SK-N-SH (cell line): ENCODE measurements at regions of chr7 and their contacts with region 1.

Region 1: GRCh38 chr7:113710310-113711106 is 208.3 kb downstream of the PPP1R3A start:
- DNase-seq: peak; percentile 46
- H3K4me3 ChIP-seq: no peak overlapping the region; a peak in 1 of 4 replicates
- H3K27ac ChIP-seq: no peak overlapping the region
- H3K4me1 ChIP-seq: no peaks in the 10 kb centered on the region
- H3K27me3 ChIP-seq: no peaks in the 10 kb centered on the region
- CTCF ChIP-seq: peak; percentile 100
- EP300 ChIP-seq: no peak
- RAD21 ChIP-seq: peak; percentile 68

Region 2: DNA sequence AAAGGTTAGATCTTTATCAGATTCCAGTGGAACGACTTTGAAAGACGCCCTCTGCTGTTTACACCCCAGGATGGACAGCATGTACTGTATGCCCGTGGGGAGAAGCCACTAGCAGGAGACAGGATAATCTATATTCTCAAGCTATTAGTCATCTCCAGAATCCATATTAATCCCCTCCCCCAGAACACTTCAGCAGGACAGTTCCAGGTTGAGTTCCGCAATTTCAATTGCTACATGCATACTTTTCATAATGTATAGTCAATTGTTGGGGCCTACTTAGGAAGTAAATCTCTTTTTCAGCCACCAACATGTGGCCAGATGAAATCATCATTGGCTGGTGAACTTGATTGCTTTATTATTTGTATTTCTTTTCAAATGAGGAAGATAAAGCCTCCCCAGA is 279.1 kb before region 1 on chr7:
- CTCF ChIA-PET with region 1: no interaction called
- POLR2A ChIA-PET with region 1: no interaction called
- DNase-seq: no peak
- H3K4me3 ChIP-seq: no peak overlapping the region
- H3K27ac ChIP-seq: no peak overlapping the region
- H3K4me1 ChIP-seq: no peaks in the 10 kb centered on the region
- H3K27me3 ChIP-seq: no peaks in the 10 kb centered on the region
- CTCF ChIP-seq: peak; percentile 20; the same call in 1 of the 2 replicates
- EP300 ChIP-seq: no peak
- RAD21 ChIP-seq: no peak

Region 3: GRCh38 chr7:113561446-113561845 is 149.1 kb before region 1 on chr7:
- CTCF ChIA-PET with region 1: no interaction called
- POLR2A ChIA-PET with region 1: no interaction called
- DNase-seq: no peak
- H3K4me3 ChIP-seq: no peak overlapping the region
- H3K27ac ChIP-seq: no peak overlapping the region
- H3K4me1 ChIP-seq: no peaks in the 10 kb centered on the region
- H3K27me3 ChIP-seq: no peaks in the 10 kb centered on the region
- CTCF ChIP-seq: no peak
- EP300 ChIP-seq: no peak
- RAD21 ChIP-seq: no peak

Region 4: GRCh38 chr7:113684165-113684564 is 26.3 kb before region 1 on chr7:
- CTCF ChIA-PET with region 1: interaction called, 13 read pairs
- POLR2A ChIA-PET with region 1: no interaction called
- DNase-seq: no peak
- H3K4me3 ChIP-seq: no peak overlapping the region
- H3K27ac ChIP-seq: no peak overlapping the region
- H3K4me1 ChIP-seq: no peaks in the 10 kb centered on the region
- H3K27me3 ChIP-seq: peaks cover 3% of the 10 kb centered on the region; the same call in 1 of the 2 replicates
- CTCF ChIP-seq: no peak
- EP300 ChIP-seq: no peak
- RAD21 ChIP-seq: no peak

Region 5: GRCh38 chr7:113698556-113699220 is 11.8 kb before region 1 on chr7:
- CTCF ChIA-PET with region 1: interaction called, 16 read pairs
- POLR2A ChIA-PET with region 1: no interaction called
- DNase-seq: peak; percentile 17
- H3K4me3 ChIP-seq: no peak overlapping the region
- H3K27ac ChIP-seq: no peak overlapping the region
- H3K4me1 ChIP-seq: no peaks in the 10 kb centered on the region
- H3K27me3 ChIP-seq: no peaks in the 10 kb centered on the region
- CTCF ChIP-seq: peak; percentile 98
- EP300 ChIP-seq: no peak
- RAD21 ChIP-seq: peak; percentile 76

Region 6: DNA sequence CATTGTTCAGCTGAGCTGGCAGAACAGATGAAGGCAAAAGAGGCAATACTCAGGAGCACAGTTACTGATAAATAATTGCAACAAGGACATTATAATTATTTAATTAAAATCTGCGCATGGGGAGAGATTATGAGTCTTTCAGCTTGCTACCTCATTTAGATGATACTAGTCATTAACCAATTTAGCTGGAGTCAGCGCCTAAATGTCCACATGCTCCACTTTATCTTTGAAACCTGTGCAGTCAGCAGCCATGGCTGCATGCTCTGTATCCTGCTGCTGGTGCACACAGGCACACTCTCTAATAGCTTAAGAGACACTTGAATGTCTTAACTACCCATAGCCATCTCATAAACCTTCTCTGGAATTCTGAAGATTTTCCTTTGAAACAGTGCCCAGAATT is 11.5 kb after region 1 on chr7:
- CTCF ChIA-PET with region 1: interaction called, 18 read pairs
- POLR2A ChIA-PET with region 1: no interaction called
- DNase-seq: no peak
- H3K4me3 ChIP-seq: no peak overlapping the region
- H3K27ac ChIP-seq: no peak overlapping the region
- H3K4me1 ChIP-seq: no peaks in the 10 kb centered on the region
- H3K27me3 ChIP-seq: no peaks in the 10 kb centered on the region
- CTCF ChIP-seq: no peak
- EP300 ChIP-seq: no peak
- RAD21 ChIP-seq: no peak

Region 7: DNA sequence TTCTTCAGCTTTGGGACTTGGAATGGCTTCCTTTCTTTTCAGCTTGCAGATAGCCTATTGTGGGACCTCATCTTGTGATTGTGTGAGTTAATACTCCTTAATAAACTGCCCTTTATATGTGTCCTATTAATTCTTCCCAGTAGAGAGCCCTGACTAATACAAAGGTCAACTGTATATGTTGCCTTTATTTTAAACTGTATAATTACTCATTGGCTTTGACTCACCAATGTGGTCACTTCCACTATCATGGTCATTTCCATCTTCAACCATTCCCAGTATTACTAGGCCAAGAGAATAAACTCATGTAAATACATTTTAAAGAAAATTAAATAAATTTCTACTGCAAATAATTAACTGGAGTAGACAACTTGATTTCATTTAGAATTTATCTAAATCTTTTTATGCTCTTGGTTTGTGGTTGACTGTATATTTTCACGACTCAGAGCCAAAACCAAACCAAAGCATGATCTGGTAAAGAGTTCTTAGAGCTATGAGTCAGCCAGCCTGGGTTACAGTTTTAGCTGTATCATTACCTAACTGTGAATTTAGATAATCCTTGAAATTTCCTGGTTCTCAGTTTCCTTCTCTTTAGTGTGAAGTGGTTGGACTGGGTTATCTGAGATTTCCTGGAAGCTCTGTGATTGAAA is 19.9 kb after region 1 on chr7:
- CTCF ChIA-PET with region 1: interaction called, 14 read pairs
- POLR2A ChIA-PET with region 1: no interaction called
- DNase-seq: no peak
- H3K4me3 ChIP-seq: no peak overlapping the region
- H3K27ac ChIP-seq: peak overlapping the region in 1 of 2 experiments; percentile 67; a peak in 2 of 4 replicates
- H3K4me1 ChIP-seq: 0 out of 4 replicates have a peak, but pooled peaks cover 0 to 4% of the 10 kb centered on the region in 2 experiments
- H3K27me3 ChIP-seq: no peaks in the 10 kb centered on the region; the same call in 1 of the 2 replicates
- CTCF ChIP-seq: no peak
- EP300 ChIP-seq: no peak
- RAD21 ChIP-seq: no peak

Region 8: GRCh38 chr7:113764401-113765035 is 54.0 kb after region 1 on chr7:
- CTCF ChIA-PET with region 1: no interaction called
- POLR2A ChIA-PET with region 1: no interaction called
- DNase-seq: no peak
- H3K4me3 ChIP-seq: no peak overlapping the region
- H3K27ac ChIP-seq: no peak overlapping the region
- H3K4me1 ChIP-seq: no peaks in the 10 kb centered on the region
- H3K27me3 ChIP-seq: no peaks in the 10 kb centered on the region; the same call in 1 of the 2 replicates
- CTCF ChIP-seq: no peak
- EP300 ChIP-seq: no peak
- RAD21 ChIP-seq: no peak

Region 9: DNA sequence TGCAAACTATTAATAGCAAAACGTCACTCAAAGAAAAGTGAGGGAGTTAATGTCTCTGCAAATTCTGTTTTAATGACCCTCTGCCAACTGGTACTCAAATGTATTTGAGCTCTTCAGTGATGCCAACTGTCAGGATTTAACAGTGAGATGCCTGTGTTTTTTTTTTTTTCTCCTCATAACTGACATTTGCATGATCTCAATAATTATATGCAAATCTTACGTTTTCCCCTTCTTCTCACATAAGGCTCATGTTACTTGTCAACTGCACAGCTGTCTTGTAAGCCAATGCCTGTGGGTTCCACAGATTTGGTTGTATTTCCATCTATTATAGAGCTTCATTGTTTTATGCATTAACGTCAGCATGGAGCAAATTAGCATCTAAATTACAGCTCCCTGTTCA is 170.1 kb after region 1 on chr7:
- CTCF ChIA-PET with region 1: no interaction called
- POLR2A ChIA-PET with region 1: no interaction called
- DNase-seq: no peak
- H3K4me3 ChIP-seq: no peak overlapping the region
- H3K27ac ChIP-seq: no peak overlapping the region
- H3K4me1 ChIP-seq: no peaks in the 10 kb centered on the region; a peak in 1 of 4 replicates
- H3K27me3 ChIP-seq: no peaks in the 10 kb centered on the region; the same call in 1 of the 2 replicates
- CTCF ChIP-seq: no peak
- EP300 ChIP-seq: no peak
- RAD21 ChIP-seq: no peak